Activated CD4-positive, alpha-beta memory T cell treated with anti-CD3 and anti-CD28 coated beads for 36 hours (primary cell): ENCODE measurements at regions of chr9 and their contacts with region 1.

Region 1: GRCh38 chr9:131668439-131669268 is 71.2 kb downstream of the RAPGEF1 start:
- DNase-seq: peak; percentile 86
- H3K4me3 Mint-ChIP-seq: peak overlapping the region; percentile 67
- H3K27ac Mint-ChIP-seq: peak overlapping the region; percentile 99
- H3K4me1 Mint-ChIP-seq: peaks cover 94% of the 10 kb centered on the region
- H3K27me3 Mint-ChIP-seq: no peaks in the 10 kb centered on the region

Region 2: DNA sequence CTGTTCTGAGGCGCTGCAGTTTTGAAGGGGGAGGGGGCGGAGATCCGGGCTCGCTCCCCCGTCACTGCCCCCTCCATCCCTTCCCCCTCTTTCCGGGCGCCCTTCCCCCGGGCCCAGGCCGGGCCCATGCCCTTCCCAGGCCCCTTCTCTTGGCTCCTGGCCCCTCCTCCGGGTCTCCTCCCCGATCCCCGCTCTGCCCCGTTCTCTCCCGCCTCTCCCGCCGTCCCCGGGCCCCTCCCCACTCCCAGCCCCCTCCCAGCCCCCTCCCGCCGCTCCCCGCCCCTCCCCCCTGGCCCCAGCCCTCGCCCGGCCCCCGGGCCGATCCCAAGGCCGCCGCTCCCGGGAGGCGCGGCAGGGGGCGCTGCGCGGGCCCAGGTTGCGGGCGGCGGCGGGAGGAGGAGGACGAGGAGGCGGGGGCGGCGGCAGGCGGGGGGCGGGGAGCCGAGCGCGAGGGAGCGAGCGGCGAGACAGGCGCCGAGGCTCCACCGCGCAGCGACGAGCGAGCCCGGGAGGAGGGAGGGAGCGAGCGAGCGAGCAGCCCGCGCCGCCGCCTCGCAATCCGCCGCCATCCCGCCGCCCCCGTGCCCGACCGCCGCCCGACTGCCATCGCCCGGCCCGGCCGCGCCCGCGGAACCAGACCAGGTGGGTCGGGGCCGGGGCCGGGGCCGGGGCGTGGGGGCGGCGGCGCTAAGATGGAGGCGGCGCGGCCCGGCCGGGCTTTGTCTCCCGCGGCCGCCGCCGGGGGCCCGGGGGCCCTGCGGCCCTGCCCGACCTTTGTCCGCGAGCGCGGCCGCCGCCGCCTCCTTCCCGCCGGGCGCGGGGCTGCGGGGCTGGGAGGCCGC is 274.8 kb before region 1 on chr9 and contains the start of gene PRRC2B:
- CTCF ChIA-PET with region 1: no interaction called
- POLR2A ChIA-PET with region 1: no interaction called
- intact Hi-C with region 1: loop called (anchors 10 kb)
- DNase-seq: peak; percentile 89
- H3K4me3 Mint-ChIP-seq: peak within 1 kb of the TSS; percentile 89
- H3K27ac Mint-ChIP-seq: peak within 1 kb of the TSS; percentile 95
- H3K4me1 Mint-ChIP-seq: peaks cover 43% of the 10 kb centered on the region
- H3K27me3 Mint-ChIP-seq: no peaks in the 10 kb centered on the region
- total RNA-seq, gene PRRC2B: 127 to 135 TPM

Region 3: DNA sequence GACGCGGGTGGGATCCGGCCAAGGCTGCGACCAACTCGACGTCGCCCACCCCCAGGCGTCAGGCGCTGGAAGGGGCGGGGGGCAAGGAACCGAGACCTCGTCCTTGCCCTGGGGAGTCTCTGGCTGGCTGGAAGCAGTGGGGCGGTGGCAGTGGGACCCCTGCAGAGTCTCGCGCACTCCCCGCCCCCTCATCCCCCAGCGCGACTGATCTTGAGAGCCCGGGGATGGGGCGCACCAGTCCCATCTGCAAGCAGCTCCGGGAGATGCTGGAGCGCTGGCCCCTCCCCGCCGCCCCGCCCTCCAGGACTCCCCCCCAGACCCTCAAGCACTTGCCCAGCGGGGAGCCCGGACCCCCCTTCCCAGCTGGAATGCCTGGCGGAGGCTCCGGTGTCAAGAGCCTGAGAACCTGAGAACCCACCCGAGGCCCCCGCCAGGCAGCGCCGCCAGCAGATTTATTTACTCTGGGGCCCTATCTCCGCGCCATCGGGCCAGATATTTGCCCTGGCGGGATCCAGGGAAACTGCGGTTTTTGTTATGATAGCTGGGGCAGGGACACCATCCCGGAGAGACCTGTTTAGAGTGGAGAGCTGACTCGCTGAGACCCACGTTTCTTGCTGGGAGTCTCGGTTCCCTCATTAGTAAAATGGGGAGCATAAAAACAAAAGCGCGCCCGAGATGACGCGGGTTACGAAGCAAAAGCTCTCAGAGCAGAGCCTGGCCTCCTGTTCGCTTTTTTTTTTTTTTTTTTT is 122.1 kb before region 1 on chr9:
- CTCF ChIA-PET with region 1: no interaction called
- POLR2A ChIA-PET with region 1: no interaction called
- intact Hi-C with region 1: no loop called
- DNase-seq: peak; percentile 46
- H3K4me3 Mint-ChIP-seq: peak overlapping the region; percentile 53
- H3K27ac Mint-ChIP-seq: no peak overlapping the region
- H3K4me1 Mint-ChIP-seq: peaks cover 13% of the 10 kb centered on the region
- H3K27me3 Mint-ChIP-seq: peaks cover 43% of the 10 kb centered on the region

Region 4: DNA sequence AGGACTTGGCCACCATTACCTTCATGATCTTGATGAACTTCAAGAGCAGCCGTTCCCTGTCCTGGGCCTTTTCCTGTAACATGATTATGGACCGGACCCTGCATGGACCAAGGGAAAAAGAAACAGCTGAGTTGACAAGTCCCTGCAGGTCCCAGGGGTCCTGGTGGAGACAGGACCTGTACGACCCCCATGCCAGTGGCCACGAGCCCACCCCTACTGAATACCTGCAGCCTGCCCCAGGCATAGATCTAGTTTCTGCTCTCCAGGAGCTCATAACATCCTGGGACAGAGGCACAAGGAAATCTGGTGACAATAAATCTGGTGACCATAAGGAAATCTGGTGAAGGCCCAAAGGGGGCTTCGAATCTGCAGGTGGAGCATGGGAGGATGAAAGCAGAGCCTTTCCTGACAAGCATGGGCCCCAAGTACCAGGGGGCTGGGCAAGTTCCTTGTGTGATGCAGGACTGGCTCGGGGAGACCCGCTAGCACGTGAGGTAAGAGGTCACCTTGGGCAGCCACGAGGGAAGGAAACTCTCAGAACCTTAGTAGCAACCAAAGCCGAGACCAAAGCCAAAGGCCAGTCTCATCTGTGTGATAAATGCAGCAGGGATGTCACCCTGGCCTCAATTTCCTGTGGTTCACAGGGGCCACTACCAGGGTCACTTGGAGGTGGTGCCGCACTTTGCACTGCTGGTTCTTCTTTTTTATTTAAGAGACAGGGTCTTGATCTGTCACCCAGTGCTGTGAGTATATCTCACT is 84.0 kb before region 1 on chr9:
- CTCF ChIA-PET with region 1: no interaction called
- POLR2A ChIA-PET with region 1: no interaction called
- intact Hi-C with region 1: no loop called
- DNase-seq: peak; percentile 29
- H3K4me3 Mint-ChIP-seq: no peak overlapping the region
- H3K27ac Mint-ChIP-seq: peak overlapping the region; percentile 84
- H3K4me1 Mint-ChIP-seq: peaks cover 27% of the 10 kb centered on the region
- H3K27me3 Mint-ChIP-seq: no peaks in the 10 kb centered on the region

Region 5: GRCh38 chr9:131605770-131606590 is 62.7 kb before region 1 on chr9:
- CTCF ChIA-PET with region 1: no interaction called
- POLR2A ChIA-PET with region 1: no interaction called
- intact Hi-C with region 1: no loop called
- DNase-seq: no peak
- H3K4me3 Mint-ChIP-seq: no peak overlapping the region
- H3K27ac Mint-ChIP-seq: no peak overlapping the region
- H3K4me1 Mint-ChIP-seq: no peaks in the 10 kb centered on the region
- H3K27me3 Mint-ChIP-seq: no peaks in the 10 kb centered on the region

Region 6: GRCh38 chr9:131635285-131635684 is 33.4 kb before region 1 on chr9:
- CTCF ChIA-PET with region 1: interaction called, 7 read pairs
- POLR2A ChIA-PET with region 1: interaction called, 3 read pairs
- intact Hi-C with region 1: loop called (anchors 1 kb)
- DNase-seq: peak; percentile 90
- H3K4me3 Mint-ChIP-seq: peak overlapping the region; percentile 12
- H3K27ac Mint-ChIP-seq: peak overlapping the region; percentile 93
- H3K4me1 Mint-ChIP-seq: peaks cover 68% of the 10 kb centered on the region
- H3K27me3 Mint-ChIP-seq: no peaks in the 10 kb centered on the region

Region 7: DNA sequence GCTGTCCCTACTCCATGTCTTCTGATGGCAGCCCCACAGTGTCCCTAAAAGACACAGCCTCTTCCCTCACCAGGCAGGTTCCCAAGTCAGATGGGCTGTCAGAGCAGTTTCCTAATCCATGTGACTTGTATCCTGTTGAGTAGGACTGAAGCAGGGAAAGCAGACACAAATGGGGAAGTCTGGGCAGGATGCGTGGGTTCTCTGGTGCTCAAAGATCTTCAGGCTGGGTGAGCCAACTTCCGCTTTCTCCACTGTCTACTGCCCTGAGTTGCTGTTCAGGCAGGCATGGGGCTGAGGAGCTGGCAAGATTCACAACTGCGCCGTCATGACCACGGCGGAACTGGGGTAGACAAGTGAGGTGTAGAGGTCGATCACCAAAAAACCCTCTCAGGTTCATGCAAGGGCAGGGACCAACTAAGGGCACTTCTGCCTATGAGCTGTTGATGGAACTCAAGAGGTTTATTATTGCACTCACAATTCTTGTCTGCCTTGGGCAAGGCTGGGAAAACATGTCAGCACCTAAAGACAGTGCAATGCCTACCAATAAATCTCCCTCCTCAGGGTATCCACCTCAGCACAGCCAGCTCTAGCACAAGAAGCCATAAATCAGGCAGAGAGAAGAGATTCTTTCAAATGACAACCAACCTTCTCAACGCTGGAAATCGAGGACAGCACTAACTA is 12.2 kb before region 1 on chr9:
- CTCF ChIA-PET with region 1: interaction called, 4 read pairs
- POLR2A ChIA-PET with region 1: interaction called, 24 read pairs
- intact Hi-C with region 1: loop called (anchors 1 kb)
- DNase-seq: peak; percentile 84
- H3K4me3 Mint-ChIP-seq: peak overlapping the region; percentile 58
- H3K27ac Mint-ChIP-seq: peak overlapping the region; percentile 91
- H3K4me1 Mint-ChIP-seq: peaks cover 86% of the 10 kb centered on the region
- H3K27me3 Mint-ChIP-seq: no peaks in the 10 kb centered on the region

Region 8: DNA sequence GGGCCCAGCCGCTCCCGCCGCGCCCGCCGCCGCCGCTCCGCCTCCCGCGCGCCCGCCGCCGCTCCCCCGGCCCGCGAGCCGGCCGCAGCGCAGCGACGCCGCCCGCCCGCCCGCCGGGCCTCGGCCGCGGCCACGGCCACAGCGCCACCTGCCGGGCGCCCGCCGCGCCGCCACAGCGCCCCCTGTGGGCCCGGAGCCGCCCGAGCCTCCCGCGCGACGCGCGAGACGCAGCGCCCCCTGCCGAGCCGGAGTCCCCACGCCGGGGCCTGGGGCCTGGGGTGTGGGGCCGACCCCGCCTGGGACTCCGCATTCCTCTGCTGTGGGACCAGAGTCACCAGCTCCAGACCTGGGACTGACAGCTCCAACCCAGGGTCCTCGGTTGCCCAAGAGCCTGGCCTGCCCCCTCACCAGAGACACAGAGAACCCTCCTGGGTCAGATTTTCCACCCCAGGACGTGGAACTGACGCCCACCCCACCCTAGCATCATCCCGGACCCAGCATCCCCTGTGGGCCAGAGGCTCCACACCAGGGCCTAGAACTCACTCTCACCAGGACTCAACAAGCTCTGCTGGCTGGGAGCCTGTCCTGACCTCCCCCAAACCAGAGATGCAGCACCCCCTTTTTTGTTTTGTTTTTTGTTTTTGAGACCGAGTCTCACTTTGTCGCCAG is 71.5 kb after region 1 on chr9 and contains the start of gene RAPGEF1:
- CTCF ChIA-PET with region 1: interaction called, 15 read pairs
- POLR2A ChIA-PET with region 1: interaction called, 76 read pairs
- intact Hi-C with region 1: no loop called
- DNase-seq: peak; percentile 86
- H3K4me3 Mint-ChIP-seq: peak within 1 kb of the TSS; percentile 91
- H3K27ac Mint-ChIP-seq: peak within 1 kb of the TSS; percentile 90
- H3K4me1 Mint-ChIP-seq: peaks cover 49% of the 10 kb centered on the region
- H3K27me3 Mint-ChIP-seq: no peaks in the 10 kb centered on the region
- total RNA-seq, gene RAPGEF1: 91.9 to 92.3 TPM